ENCODE measurements at regions of chr21 and their contacts with region 1.

Region 1: DNA sequence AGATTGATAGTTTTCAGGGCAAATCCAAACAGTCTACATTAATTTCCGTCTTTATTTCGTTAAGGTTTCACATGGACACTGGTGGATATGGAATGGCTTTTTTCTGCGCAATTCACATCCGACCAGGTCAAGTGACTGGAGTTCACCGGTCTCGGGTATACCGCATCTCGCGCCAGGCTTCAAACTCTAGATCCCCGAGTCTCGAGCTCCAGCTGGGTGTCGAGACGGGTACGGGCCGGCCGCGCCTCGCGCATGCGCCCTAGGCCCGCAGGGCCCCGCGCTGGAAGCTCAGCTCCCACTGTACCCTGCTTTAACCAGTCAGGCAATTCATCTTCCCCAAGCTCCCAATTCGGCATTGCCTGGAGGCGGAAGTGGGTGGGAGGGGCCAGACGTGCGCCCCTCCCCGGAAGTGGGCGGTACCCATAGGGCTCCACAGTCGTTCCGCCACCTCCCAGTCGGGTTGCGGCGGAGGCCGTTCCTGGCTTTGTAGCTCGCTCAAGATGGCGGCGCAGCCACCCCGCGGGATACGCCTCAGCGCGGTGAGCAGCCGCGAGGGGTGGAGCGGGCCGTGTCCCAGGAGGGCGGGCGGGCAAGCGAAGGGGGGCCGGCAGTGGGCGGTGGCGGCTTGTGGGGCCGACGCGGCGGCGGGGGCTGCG is at the start of gene MORC3:
- DNase-seq: peak; percentile 97 to 99 (median 98)
- H3K4me3 ChIP-seq: peak within 1 kb of the TSS; percentile 26 to 93 (median 84)
- H3K27ac ChIP-seq: peak within 1 kb of the TSS; percentile 87 to 100 (median 97)
- H3K4me1 ChIP-seq: peaks cover 23 to 40% of the 10 kb centered on the region in 2 donors
- H3K27me3 ChIP-seq: no peaks in the 10 kb centered on the region
- CTCF ChIP-seq: no peak
- POLR2A ChIP-seq: peak; percentile 87 to 96
- total RNA-seq, gene MORC3: 17.6 to 32.4 (median 27.8) TPM

Region 2: DNA sequence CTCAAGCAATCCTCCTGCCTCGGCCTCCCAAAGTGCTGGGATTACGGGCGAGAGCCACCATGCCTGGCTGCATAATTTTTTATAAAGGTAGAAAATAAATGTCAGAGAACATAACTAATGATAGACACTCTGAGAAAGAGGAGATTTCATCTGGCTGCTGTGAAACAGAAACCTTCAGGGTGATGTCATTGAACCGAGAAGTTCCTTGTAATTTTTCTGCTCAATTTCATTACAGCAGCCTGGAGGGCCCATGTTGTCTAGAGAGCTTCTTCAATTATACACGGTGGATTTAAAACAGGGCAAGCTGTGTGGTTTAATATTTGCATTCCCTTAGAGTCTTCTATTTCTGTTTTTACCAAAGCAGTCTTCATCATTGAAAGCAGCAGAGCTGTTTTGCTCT is 64.2 kb before region 1 on chr21:
- intact Hi-C with region 1: loop called in 1 of 2 experiments (anchors 10 kb)
- DNase-seq: no peak
- H3K4me3 ChIP-seq: no peak overlapping the region
- H3K27ac ChIP-seq: no peak overlapping the region
- H3K4me1 ChIP-seq: peaks cover 0 to under 1% of the 10 kb centered on the region in 2 donors
- H3K27me3 ChIP-seq: no peaks in the 10 kb centered on the region
- CTCF ChIP-seq: no peak
- POLR2A ChIP-seq: no peak

Measured in adrenal gland (tissue), 19 donors.